OCI-LY7 (cell line): ENCODE measurements at regions of chr3 and their contacts with region 1.

Region 1: DNA sequence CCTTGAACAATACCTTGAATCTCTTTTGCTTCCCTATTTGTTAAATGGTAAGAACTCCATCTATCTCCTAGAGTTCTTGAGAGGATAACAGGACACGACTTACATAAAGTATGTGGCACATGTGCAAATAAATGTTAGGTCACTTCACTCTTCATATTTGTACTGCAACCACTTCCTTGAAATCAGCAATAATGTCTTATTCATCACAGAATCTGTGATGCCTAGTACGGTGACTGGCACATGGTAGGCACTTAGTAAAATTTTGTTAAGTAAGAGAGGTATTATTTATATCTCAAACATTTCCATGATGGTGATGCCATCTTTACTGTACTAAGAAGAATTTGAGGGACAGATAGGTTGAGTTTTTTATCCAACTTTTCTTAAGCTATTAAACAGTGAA is 14.3 kb downstream of the CD47 start:
- DNase-seq: no peak
- H3K4me3 ChIP-seq: no peak overlapping the region
- H3K27ac ChIP-seq: no peak overlapping the region
- H3K4me1 ChIP-seq: no peaks in the 10 kb centered on the region
- CTCF ChIP-seq: no peak

Region 2: DNA sequence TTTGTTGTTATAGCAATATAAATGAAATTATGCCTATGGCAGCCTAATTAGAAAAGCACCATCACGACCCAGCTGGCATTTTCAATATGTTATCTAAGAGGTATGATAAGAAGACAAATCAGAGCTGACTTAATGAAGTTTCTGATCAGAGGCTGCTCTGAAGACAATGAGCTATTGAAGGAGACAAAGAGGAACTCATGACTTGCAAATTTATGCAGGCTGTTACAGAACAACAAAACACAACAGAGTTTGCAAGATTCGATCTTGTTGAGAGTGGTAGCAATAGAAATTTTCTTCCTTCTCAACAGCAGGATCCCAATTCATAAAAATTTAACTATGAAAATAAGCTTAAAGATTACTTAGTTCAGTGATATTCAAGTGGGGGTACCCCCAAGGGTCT is 691.7 kb before region 1 on chr3:
- CTCF ChIA-PET with region 1: no interaction called
- POLR2A ChIA-PET with region 1: no interaction called
- intact Hi-C with region 1: no loop called
- DNase-seq: no peak
- H3K4me3 ChIP-seq: no peak overlapping the region
- H3K27ac ChIP-seq: no peak overlapping the region
- H3K4me1 ChIP-seq: no peaks in the 10 kb centered on the region
- CTCF ChIP-seq: no peak

Region 3: GRCh38 chr3:108062051-108062450 is 14.5 kb before region 1 on chr3:
- CTCF ChIA-PET with region 1: no interaction called
- POLR2A ChIA-PET with region 1: interaction called, 5 read pairs
- intact Hi-C with region 1: loop called (anchors 2 kb)
- DNase-seq: peak; percentile 30
- H3K4me3 ChIP-seq: no peak overlapping the region
- H3K27ac ChIP-seq: no peak overlapping the region
- H3K4me1 ChIP-seq: peaks cover 9% of the 10 kb centered on the region
- CTCF ChIP-seq: no peak

Region 4: DNA sequence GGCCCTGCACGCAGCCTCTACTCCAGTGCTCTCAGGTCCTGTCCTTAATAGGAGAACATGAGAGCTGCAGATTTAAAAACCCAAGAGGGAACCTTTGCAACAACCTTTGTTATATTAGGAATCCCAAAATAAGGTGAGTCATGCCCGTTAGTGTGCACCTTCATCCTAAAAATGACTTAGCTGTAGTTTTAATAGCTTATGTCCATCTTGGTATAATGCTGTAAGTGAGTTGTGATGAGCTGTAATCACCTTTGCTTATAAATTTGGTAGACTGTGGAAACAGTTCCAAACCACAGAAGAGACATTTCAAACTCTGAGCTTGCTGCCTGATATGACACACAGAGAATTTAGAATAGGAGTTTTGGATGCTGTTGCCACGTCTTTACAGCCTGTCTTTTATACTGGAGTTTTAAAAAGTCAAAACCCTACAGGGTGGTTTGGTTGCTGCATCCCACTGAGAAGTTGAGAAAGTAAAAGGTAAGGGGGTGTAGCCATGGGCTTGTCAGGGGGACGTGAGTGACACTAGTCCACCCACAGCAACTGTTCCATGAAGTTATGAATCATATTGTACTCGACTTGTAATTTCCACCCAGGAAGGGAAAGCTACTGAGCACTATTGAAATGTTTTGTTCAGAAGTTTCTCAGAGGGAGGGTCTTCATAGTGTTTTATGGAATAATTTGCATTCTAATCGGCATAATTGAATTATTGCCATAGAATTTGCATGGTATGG is 41.6 kb after region 1 on chr3:
- CTCF ChIA-PET with region 1: interaction called, 3 read pairs
- POLR2A ChIA-PET with region 1: interaction called, 3 read pairs
- intact Hi-C with region 1: loop called (anchors 1 kb)
- DNase-seq: no peak
- H3K4me3 ChIP-seq: no peak overlapping the region
- H3K27ac ChIP-seq: no peak overlapping the region
- H3K4me1 ChIP-seq: peaks cover 14% of the 10 kb centered on the region
- CTCF ChIP-seq: no peak